ENCODE measurements at regions of chr6 and their contacts with region 1.

Region 1: GRCh38 chr6:36623547-36624459 is 29.6 kb downstream of the SRSF3 start:
- DNase-seq: peak; percentile 85 to 95 (median 90)
- H3K4me3 ChIP-seq: no peak overlapping the region
- H3K27ac ChIP-seq: no peak overlapping the region
- H3K4me1 ChIP-seq: peaks cover 8 to 38% of the 10 kb centered on the region in 2 donors
- H3K27me3 ChIP-seq: no peaks in the 10 kb centered on the region
- CTCF ChIP-seq: peak; percentile 75 to 93 (median 88)
- POLR2A ChIP-seq: no peak

Region 2: DNA sequence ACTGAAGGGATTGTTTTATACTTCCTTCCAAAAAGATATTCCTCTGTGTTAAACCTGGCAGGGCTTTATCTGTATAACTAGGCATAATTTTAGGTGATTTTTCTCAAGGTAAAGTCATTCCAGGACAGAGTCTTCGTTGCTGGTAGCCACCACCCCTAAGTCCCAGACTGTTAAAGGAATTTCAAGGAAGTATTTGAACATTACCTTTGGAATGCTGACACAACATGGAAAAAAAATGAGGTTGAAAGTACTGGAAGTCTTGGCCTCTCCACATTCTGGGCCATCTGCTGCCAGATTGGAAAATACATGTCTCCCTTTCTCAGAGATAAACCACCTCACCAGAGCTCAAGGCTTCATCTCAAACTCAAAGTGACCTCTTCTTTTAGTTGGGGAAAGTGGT is 209.3 kb before region 1 on chr6:
- intact Hi-C with region 1: no loop called
- DNase-seq: no peak
- H3K4me3 ChIP-seq: no peak overlapping the region
- H3K27ac ChIP-seq: no peak overlapping the region
- H3K4me1 ChIP-seq: no peaks in the 10 kb centered on the region
- H3K27me3 ChIP-seq: no peaks in the 10 kb centered on the region
- CTCF ChIP-seq: no peak
- POLR2A ChIP-seq: no peak

Region 3: GRCh38 chr6:36678518-36679027 is 54.8 kb after region 1 on chr6 and contains the start of gene CDKN1A:
- intact Hi-C with region 1: loop called (anchors 5 kb)
- DNase-seq: peak; percentile 92 to 96 (median 94)
- H3K4me3 ChIP-seq: peak within 1 kb of the TSS; percentile 5 to 97 (median 66)
- H3K27ac ChIP-seq: peak within 1 kb of the TSS; percentile 85 to 98 (median 95)
- H3K4me1 ChIP-seq: peaks cover 13 to 51% of the 10 kb centered on the region in 2 donors
- H3K27me3 ChIP-seq: no peaks in the 10 kb centered on the region
- CTCF ChIP-seq: peak in 3 of 6 experiments; percentile 20 to 30 (median 22)
- POLR2A ChIP-seq: peak; percentile 99
- total RNA-seq, gene CDKN1A: 44.7 to 154 (median 87.6) TPM

Measured in adrenal gland (tissue), 19 donors.